ENCODE measurements at regions of chr5 and their contacts with region 1.

Region 1: DNA sequence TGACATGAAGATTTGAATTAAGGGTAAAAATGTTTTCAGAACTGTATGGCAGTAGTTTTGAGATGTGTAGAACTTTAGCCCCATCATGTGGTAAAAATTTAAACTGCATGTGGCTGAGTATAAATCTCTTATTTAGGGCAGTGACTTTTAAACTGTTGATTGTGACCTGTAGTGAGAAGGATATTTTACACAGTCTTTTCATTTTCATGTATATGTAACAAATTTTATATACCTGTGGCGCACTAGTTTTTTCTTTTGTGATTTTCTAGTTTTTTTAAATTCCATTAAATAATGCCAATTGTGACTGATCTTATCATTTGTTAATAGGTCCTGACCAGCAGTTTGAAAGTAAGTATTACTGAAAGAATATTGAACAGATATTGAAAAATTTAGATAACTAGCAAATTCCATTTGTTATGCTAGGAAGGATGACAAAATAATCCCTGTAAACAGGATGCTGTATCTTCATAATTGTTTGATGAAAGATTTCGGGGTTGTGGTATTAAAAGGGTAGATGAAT is 47.2 kb downstream of the GPBP1 start:
- DNase-seq: peak; percentile 68
- H3K4me3 ChIP-seq: no peak overlapping the region
- H3K27ac ChIP-seq: no peak overlapping the region
- H3K4me1 ChIP-seq: peaks cover 3% of the 10 kb centered on the region
- H3K27me3 ChIP-seq: no peaks in the 10 kb centered on the region
- CTCF ChIP-seq: peak; percentile 84

Region 2: DNA sequence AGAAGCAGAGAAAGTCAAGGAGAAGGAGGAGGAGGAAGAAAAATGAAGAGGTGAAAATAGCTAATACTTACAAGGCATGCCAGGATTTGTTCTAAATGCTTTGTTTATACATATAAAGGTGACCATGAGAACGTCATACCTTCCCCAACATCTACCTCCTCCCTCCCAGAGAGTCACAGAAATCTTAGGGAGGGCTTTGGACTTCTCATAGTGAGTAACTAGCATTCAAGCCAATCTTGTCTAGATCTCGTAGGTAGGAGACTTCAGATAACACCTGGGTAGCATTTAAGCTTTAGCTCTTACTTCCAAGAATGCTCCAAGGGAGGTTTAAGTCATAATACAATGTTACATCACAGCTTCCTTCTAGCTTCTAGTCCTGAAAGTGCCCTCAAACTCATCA is 83.7 kb before region 1 on chr5:
- CTCF ChIA-PET with region 1: no interaction called
- POLR2A ChIA-PET with region 1: no interaction called
- intact Hi-C with region 1: loop called (anchors 2 kb)
- DNase-seq: no peak
- H3K4me3 ChIP-seq: no peak overlapping the region
- H3K27ac ChIP-seq: no peak overlapping the region
- H3K4me1 ChIP-seq: no peaks in the 10 kb centered on the region
- H3K27me3 ChIP-seq: no peaks in the 10 kb centered on the region
- CTCF ChIP-seq: no peak

Region 3: GRCh38 chr5:57173185-57174127 is 47.7 kb before region 1 on chr5 and contains the start of gene GPBP1:
- CTCF ChIA-PET with region 1: no interaction called
- POLR2A ChIA-PET with region 1: no interaction called
- intact Hi-C with region 1: loop called (anchors 5 kb)
- DNase-seq: peak; percentile 100
- H3K4me3 ChIP-seq: peak within 1 kb of the TSS; percentile 88
- H3K27ac ChIP-seq: peak within 1 kb of the TSS; percentile 99
- H3K4me1 ChIP-seq: peaks cover 2% of the 10 kb centered on the region
- H3K27me3 ChIP-seq: no peaks in the 10 kb centered on the region
- CTCF ChIP-seq: no peak
- total RNA-seq, gene GPBP1: 85.5 and 86.4 TPM in 2 replicates

Region 4: GRCh38 chr5:57243286-57244137 is 22.4 kb after region 1 on chr5:
- CTCF ChIA-PET with region 1: no interaction called
- POLR2A ChIA-PET with region 1: no interaction called
- intact Hi-C with region 1: no loop called
- DNase-seq: no peak
- H3K4me3 ChIP-seq: no peak overlapping the region
- H3K27ac ChIP-seq: no peak overlapping the region
- H3K4me1 ChIP-seq: no peaks in the 10 kb centered on the region
- H3K27me3 ChIP-seq: no peaks in the 10 kb centered on the region
- CTCF ChIP-seq: no peak

Region 5: DNA sequence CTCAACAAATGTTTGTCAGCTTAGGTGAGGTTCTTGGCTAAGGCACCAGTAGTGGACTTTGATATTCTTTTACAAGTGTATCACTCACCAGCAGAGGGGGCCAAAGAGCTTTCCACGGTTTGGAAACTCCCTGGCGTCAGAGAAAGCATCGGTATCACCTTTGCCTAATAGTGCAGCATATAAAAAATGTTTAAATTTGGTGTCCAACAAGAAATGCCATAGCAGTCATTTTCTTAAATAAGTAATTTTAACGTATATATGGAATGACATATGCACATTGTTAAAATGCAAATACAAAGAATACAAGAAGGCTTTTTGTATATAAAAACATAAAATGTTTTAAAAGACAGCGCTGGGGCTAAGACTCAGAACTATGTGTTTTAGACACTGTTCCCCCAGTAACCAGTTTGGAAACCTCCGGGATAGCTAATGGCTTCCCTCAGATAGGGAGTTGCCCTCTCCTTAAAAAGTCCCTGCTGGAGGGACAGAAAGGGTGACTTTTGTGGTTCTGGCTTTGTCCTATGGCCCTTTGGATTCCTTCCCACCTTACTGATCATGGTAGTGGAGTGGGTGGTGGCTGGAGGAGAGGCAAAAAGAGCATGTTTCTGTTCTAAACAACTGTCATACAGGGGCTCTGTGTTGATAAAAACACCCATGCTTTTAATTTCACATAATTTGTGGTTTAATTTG is 77.3 kb after region 1 on chr5:
- CTCF ChIA-PET with region 1: no interaction called
- POLR2A ChIA-PET with region 1: no interaction called
- intact Hi-C with region 1: no loop called
- DNase-seq: peak; percentile 84
- H3K4me3 ChIP-seq: no peak overlapping the region
- H3K27ac ChIP-seq: no peak overlapping the region
- H3K4me1 ChIP-seq: peaks cover 6% of the 10 kb centered on the region
- H3K27me3 ChIP-seq: no peaks in the 10 kb centered on the region
- CTCF ChIP-seq: peak; percentile 79

Measured in A673 (cell line).